PC-9 (cell line): ENCODE measurements at regions of chr11 and their contacts with region 1.

Region 1: GRCh38 chr11:62705880-62706849 is 1.1 kb downstream of the BSCL2 start:
- DNase-seq: peak; percentile 82 to 96
- H3K4me3 ChIP-seq: peak overlapping the region; percentile 89
- H3K27ac ChIP-seq: peak overlapping the region; percentile 79
- H3K4me1 ChIP-seq: peaks cover 30% of the 10 kb centered on the region
- H3K27me3 ChIP-seq: no peaks in the 10 kb centered on the region
- CTCF ChIP-seq: no peak

Region 2: DNA sequence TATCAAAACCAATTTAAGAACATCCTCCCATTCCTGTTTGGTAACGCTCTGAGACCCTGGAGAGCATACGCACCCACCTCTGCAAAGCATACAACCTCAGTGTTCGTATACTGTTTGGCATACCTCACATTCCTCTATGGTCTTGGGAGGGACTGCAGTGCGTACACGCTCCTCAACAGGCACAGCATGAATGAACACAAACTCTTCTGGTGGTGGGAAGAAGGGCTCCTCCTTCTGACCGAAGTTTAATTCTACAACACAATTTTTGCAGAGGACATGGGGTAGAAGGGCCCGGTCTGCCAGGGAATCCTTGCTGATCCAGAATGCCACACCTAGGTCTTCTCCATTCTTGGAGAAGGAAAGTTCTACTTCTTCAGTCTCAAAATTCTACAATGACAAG is 15.8 kb after region 1 on chr11:
- CTCF ChIA-PET with region 1: interaction called, 4 read pairs
- POLR2A ChIA-PET with region 1: no interaction called
- intact Hi-C with region 1: loop called (anchors 1 kb)
- DNase-seq: no peak
- H3K4me3 ChIP-seq: no peak overlapping the region
- H3K27ac ChIP-seq: no peak overlapping the region
- H3K4me1 ChIP-seq: peaks cover 16% of the 10 kb centered on the region
- H3K27me3 ChIP-seq: no peaks in the 10 kb centered on the region
- CTCF ChIP-seq: no peak; the same call in 1 of the 2 replicates

Region 3: GRCh38 chr11:62855571-62856332 is 149.6 kb after region 1 on chr11:
- CTCF ChIA-PET with region 1: no interaction called
- POLR2A ChIA-PET with region 1: no interaction called
- intact Hi-C with region 1: no loop called
- DNase-seq: peak; percentile 98 to 99
- H3K4me3 ChIP-seq: peak overlapping the region; percentile 97
- H3K27ac ChIP-seq: peak overlapping the region; percentile 85
- H3K4me1 ChIP-seq: peaks cover 37% of the 10 kb centered on the region
- H3K27me3 ChIP-seq: no peaks in the 10 kb centered on the region
- CTCF ChIP-seq: no peak